PC-9 (cell line): ENCODE measurements at regions of chr13 and their contacts with region 1.

Region 1: DNA sequence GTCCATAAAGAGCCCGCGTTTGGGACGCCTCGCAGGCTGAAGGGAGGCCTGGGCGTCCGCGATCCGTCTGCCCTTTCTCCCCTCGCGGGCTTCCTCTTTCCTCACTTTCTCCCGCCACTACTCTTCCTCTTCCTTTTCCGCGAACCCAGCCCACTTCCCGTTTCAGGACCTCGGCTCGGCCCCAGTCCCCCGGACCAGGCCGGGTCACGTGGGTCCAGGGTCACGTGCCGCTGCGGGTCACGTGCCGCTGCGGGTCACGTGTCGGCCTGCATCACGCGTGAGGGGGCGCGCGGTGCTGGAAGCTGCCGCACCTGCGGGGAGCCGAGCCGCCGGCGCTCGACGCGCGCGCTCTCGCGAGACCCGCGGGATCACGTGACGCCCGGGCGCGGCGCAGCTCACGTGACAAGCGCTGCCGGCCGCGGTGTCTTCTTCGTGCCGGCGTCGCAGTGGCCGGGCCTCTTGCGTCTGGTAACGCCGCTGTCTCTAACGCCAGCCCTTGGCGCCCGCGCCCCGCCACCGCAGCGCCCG is at the start of gene LAMP1:
- DNase-seq: peak; percentile 87 to 98
- H3K4me3 ChIP-seq: peak within 1 kb of the TSS; percentile 78
- H3K27ac ChIP-seq: peak within 1 kb of the TSS; percentile 70
- H3K4me1 ChIP-seq: peaks cover 25% of the 10 kb centered on the region
- H3K27me3 ChIP-seq: no peaks in the 10 kb centered on the region
- CTCF ChIP-seq: no peak
- total RNA-seq, gene LAMP1: 186 and 263 TPM in 2 replicates

Region 2: GRCh38 chr13:112869202-112870050 is 427.5 kb before region 1 on chr13:
- CTCF ChIA-PET with region 1: no interaction called
- POLR2A ChIA-PET with region 1: no interaction called
- intact Hi-C with region 1: no loop called
- DNase-seq: no peak
- H3K4me3 ChIP-seq: no peak overlapping the region
- H3K27ac ChIP-seq: no peak overlapping the region
- H3K4me1 ChIP-seq: no peaks in the 10 kb centered on the region
- H3K27me3 ChIP-seq: no peaks in the 10 kb centered on the region
- CTCF ChIP-seq: no peak

Region 3: GRCh38 chr13:113098162-113098732 is 198.7 kb before region 1 on chr13:
- CTCF ChIA-PET with region 1: no interaction called
- POLR2A ChIA-PET with region 1: no interaction called
- intact Hi-C with region 1: no loop called
- DNase-seq: no peak
- H3K4me3 ChIP-seq: no peak overlapping the region
- H3K27ac ChIP-seq: no peak overlapping the region
- H3K4me1 ChIP-seq: no peaks in the 10 kb centered on the region
- H3K27me3 ChIP-seq: no peaks in the 10 kb centered on the region
- CTCF ChIP-seq: no peak

Region 4: DNA sequence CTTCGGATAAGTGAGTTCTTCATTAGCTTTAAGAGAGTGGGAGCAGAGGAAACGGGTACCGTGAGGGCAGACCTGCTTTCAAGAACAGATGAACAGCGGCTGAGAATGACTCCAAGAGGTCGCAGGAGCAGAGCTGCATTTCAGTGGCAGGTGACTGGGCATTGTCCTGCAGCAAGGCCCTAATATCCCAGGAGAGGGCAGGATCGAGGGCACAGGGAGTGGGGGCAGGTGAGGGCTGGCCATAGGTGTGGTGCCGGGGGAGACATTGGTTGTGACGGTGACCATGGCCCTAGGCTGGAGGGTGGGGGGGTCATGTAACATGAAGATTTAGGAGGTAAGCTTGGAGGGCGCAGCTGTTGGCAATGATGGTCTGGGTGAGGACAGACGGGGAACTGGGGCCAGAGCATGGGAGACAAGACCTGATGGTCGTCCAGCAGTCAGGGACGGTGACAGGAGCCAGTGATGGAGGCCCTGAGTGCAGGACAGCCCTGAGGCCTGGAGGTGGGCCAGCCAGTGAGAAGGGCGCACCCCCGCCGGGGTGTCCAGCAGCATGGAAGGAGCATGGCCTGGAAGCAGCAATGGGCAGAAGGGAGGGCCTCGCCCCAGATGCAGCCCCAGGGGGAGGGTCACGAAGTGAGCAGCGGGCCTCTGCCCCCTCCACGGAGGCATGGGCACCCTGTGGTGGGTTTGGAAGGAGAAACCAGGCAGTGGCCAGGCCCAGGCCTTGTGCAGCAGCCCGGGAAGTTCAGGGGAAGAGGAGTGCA is 29.1 kb before region 1 on chr13:
- CTCF ChIA-PET with region 1: interaction called, 10 read pairs
- POLR2A ChIA-PET with region 1: no interaction called
- intact Hi-C with region 1: no loop called
- DNase-seq: no peak
- H3K4me3 ChIP-seq: no peak overlapping the region
- H3K27ac ChIP-seq: no peak overlapping the region
- H3K4me1 ChIP-seq: no peaks in the 10 kb centered on the region
- H3K27me3 ChIP-seq: no peaks in the 10 kb centered on the region
- CTCF ChIP-seq: no peak

Region 5: GRCh38 chr13:113317031-113317430 is 20.1 kb after region 1 on chr13:
- CTCF ChIA-PET with region 1: no interaction called
- POLR2A ChIA-PET with region 1: interaction called, 11 read pairs
- intact Hi-C with region 1: no loop called
- DNase-seq: no peak
- H3K4me3 ChIP-seq: no peak overlapping the region
- H3K27ac ChIP-seq: no peak overlapping the region
- H3K4me1 ChIP-seq: no peaks in the 10 kb centered on the region
- H3K27me3 ChIP-seq: no peaks in the 10 kb centered on the region
- CTCF ChIP-seq: no peak

Region 6: DNA sequence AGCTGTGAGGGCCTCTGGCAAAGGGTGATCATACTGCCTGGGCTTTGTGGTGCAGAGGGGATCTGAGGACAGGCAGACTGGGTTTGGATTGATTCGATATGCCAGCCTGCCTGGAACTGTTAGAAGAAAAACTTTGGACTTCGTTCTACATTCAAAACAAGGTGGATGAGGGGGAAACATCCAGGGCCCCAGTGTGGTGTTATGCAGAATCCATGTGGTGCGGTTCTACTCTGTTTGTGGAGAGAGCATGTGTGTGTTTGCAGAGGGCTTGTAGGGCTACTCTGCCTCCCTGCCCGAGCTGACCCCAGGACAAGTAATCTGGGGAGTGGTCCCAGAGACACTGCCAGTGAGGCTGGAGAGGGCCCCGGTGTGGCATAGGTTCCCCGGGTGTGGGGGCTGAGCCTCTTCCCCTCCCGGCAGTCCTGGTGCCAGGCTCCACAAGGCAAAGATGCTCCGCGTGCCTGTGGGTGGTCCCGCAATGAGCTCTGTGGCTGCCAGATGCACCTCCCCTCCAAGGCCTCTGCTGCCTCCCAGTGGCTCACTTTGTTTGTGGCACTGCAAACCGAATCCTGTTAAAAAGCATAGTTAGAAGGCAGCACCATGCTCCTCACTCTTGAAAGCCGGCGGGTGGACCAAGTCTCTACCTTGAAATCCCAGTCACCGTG is 265.3 kb after region 1 on chr13:
- CTCF ChIA-PET with region 1: no interaction called
- POLR2A ChIA-PET with region 1: no interaction called
- intact Hi-C with region 1: no loop called
- DNase-seq: peak; percentile 53 to 60
- H3K4me3 ChIP-seq: no peak overlapping the region
- H3K27ac ChIP-seq: no peak overlapping the region
- H3K4me1 ChIP-seq: no peaks in the 10 kb centered on the region
- H3K27me3 ChIP-seq: no peaks in the 10 kb centered on the region
- CTCF ChIP-seq: peak; percentile 82

Region 7: DNA sequence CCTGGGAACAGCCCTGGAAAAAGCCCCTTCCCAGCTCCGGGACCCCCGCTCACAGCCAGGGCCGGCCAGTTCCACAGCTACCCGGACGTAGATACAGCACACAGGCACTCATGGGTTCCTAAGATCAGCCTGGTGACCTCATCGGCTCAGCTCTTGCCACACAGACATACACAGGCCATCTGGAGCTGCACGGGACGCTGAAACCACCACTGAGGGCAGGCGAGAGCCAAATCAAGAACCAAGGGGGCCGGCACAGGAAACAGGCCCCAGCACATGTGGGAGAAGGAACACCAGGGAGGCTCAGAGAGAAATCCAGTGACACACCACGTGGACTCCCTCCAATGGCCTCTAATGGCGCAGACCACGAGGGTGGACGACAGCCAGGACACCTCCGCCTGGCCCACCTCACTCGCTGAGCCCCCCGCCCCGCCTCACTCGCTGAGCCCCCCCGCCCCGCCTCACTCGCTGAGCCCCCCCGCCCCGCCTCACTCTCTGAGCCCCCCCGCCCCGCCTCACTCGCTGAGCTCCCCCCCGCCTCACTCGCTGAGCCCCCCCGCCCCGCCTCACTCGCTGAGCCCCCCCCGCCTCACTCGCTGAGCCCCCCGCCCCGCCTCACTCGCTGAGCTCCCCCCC is 746.6 kb after region 1 on chr13:
- CTCF ChIA-PET with region 1: no interaction called
- POLR2A ChIA-PET with region 1: no interaction called
- intact Hi-C with region 1: no loop called
- DNase-seq: no peak
- H3K4me3 ChIP-seq: no peak overlapping the region
- H3K27ac ChIP-seq: no peak overlapping the region
- H3K4me1 ChIP-seq: no peaks in the 10 kb centered on the region
- H3K27me3 ChIP-seq: no peaks in the 10 kb centered on the region
- CTCF ChIP-seq: no peak